Endothelial cell of umbilical vein (primary cell): ENCODE measurements at regions of chr5 and their contacts with region 1.

Region 1: GRCh38 chr5:180090098-180090768 is 18.7 kb upstream of the RNF130 start:
- DNase-seq: peak; percentile 77
- H3K4me3 ChIP-seq: peak overlapping the region; percentile 41 to 76 (median 72)
- H3K27ac ChIP-seq: peak overlapping the region; percentile 49
- H3K4me1 ChIP-seq: peaks cover 4% of the 10 kb centered on the region
- H3K27me3 ChIP-seq: peaks cover 1 to 4% of the 10 kb centered on the region in 2 experiments
- CTCF ChIP-seq: peak; percentile 79 to 85
- POLR2A ChIP-seq: no peak

Region 2: DNA sequence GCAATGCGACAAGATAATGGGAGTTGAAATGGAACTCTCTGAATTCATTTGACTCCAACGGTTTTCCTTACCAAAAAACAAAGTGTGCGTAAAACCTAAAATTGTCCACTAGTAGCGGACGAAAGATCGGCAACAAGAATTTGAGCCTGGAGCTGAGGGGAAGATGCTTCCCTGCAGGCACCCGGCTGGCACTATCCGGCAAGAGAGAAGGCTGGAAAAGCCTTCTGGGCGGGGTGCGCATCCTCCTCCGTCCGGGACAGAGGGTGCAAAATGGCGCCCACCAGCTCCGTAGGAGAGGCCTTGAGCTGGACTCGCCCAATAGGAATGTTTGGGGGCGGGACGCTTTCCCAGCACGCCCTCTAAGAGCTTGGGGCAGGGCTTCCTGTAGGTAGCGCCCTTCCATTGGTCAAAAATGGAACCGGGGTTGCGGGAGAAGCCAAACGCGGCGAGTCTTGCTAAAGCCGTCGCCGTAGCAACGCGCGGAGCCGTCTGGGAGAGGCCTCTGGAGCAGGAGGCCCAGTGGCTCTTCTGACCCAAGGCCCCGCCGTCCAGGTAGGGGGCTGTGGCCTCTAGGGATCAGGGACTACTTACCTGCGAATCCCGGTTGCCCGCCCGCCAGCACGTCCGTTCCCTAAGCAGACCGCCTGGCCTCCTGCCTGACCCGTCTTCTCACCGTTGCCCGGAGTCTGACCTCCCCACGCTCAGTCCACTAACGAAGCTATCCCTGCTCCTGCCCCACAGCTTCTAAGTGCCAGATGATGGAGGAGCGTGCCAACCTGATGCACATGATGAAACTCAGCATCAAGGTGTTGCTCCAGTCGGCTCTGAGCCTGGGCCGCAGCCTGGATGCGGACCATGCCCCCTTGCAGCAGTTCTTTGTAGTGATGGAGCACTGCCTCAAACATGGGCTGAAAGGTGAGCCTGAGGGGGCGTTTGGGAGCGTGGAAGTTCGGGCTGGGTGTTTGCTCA is 530.7 kb before region 1 on chr5:
- CTCF ChIA-PET with region 1: no interaction called
- POLR2A ChIA-PET with region 1: no interaction called
- dilution Hi-C with region 1: no loop called
- intact Hi-C with region 1: loop called (anchors 10 kb)
- DNase-seq: peak; percentile 98
- H3K4me3 ChIP-seq: peak overlapping the region; percentile 22 to 83 (median 48)
- H3K27ac ChIP-seq: peak overlapping the region; percentile 56
- H3K4me1 ChIP-seq: peaks cover 13% of the 10 kb centered on the region
- H3K27me3 ChIP-seq: no peaks in the 10 kb centered on the region
- CTCF ChIP-seq: no peak
- POLR2A ChIP-seq: peak; percentile 90

Region 3: GRCh38 chr5:179858586-179859427 is 231.4 kb before region 1 on chr5 and contains the start of gene MRNIP:
- CTCF ChIA-PET with region 1: no interaction called
- POLR2A ChIA-PET with region 1: no interaction called
- dilution Hi-C with region 1: no loop called
- intact Hi-C with region 1: loop called (anchors 1 kb)
- DNase-seq: peak; percentile 97
- H3K4me3 ChIP-seq: peak within 1 kb of the TSS; percentile 60 to 97 (median 75)
- H3K27ac ChIP-seq: no peak within 1 kb of the TSS
- H3K4me1 ChIP-seq: no peaks in the 10 kb centered on the region
- H3K27me3 ChIP-seq: no peaks in the 10 kb centered on the region
- CTCF ChIP-seq: peak in 1 of 2 donors; percentile 9
- POLR2A ChIP-seq: peak; percentile 82
- total RNA-seq, gene MRNIP: 17.6 and 19.1 TPM in 2 replicates

Region 4: DNA sequence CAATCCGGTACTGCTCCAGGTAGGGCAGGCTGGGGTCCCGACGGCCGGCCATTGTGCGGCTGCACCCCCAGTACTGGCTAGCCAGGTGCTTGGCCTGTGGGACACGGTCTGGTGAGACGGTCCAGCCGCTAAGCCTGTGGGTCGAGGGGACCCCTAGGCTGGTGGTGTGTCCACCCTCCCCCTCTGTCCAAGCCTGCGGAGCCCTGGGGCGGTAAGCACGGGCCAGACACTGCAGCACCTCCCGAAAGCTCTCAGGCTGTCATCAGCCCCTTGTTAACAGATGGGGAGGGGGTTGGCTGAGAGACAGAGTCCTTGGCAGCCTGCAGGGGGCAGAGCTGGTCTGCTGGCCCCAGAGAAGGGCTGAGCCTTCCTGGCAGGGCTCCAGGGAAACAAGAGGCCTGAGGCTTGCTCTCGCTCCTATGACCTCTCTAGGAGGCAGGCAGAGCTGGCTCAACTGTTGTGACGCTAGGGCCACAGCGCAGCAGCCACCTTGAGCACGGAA is 219.8 kb before region 1 on chr5:
- CTCF ChIA-PET with region 1: interaction called, 4 read pairs
- POLR2A ChIA-PET with region 1: no interaction called
- dilution Hi-C with region 1: no loop called
- intact Hi-C with region 1: loop called (anchors 1 kb)
- DNase-seq: peak; percentile 54
- H3K4me3 ChIP-seq: no peak overlapping the region
- H3K27ac ChIP-seq: no peak overlapping the region
- H3K4me1 ChIP-seq: no peaks in the 10 kb centered on the region
- H3K27me3 ChIP-seq: no peaks in the 10 kb centered on the region
- CTCF ChIP-seq: peak in 1 of 2 donors; percentile 72
- POLR2A ChIP-seq: no peak

Region 5: DNA sequence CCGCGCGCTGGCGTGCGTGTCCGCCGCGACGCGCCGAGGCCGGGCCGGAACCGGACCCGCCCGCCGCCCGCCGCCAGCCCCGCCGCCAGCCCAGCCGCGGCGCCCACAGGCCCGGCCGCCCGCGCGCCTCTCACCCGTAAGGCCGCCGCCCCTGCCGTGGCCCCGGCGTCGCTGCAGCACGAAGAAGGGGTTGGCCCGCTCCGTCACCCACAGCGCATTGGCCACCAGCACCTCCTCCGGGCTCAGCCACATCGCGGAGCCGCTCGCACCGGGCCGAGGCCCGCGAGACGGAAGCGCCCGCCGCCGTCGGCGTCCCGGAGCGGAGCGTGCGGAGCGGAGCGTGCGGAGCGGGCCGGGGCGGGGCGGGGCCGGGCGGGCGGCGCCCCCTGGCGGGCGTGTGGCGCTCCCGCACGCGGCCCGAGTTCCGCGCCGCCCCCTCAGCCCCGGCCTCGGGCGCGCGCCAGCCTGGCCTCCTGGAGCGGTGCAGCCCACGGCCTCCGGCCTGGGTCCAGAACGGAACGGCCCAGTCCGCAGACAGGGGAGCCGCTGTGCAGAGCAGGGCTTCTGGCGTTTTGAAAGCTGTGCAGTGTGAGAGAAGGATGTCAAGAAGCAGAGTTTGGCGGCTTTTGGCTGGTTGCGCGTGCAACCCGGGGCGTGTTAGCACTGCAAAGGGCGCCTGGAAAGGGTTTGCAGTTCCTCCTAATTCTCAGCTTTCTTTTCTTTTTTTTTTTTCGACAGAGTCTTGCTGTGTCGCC is 182.5 kb before region 1 on chr5 and contains the start of gene TBC1D9B:
- CTCF ChIA-PET with region 1: interaction called, 7 read pairs
- POLR2A ChIA-PET with region 1: no interaction called
- dilution Hi-C with region 1: no loop called
- intact Hi-C with region 1: loop called (anchors 1 kb)
- DNase-seq: peak; percentile 45
- H3K4me3 ChIP-seq: peak within 1 kb of the TSS; percentile 36 to 51 (median 48)
- H3K27ac ChIP-seq: no peak within 1 kb of the TSS
- H3K4me1 ChIP-seq: peaks cover 29% of the 10 kb centered on the region
- H3K27me3 ChIP-seq: no peaks in the 10 kb centered on the region
- CTCF ChIP-seq: peak; percentile 15 to 23
- POLR2A ChIP-seq: peak; percentile 80
- total RNA-seq, gene TBC1D9B: 120 and 150 TPM in 2 replicates

Region 6: GRCh38 chr5:179980767-179981166 is 109.5 kb before region 1 on chr5:
- CTCF ChIA-PET with region 1: interaction called, 11 read pairs
- POLR2A ChIA-PET with region 1: no interaction called
- dilution Hi-C with region 1: no loop called
- intact Hi-C with region 1: no loop called
- DNase-seq: no peak
- H3K4me3 ChIP-seq: no peak overlapping the region
- H3K27ac ChIP-seq: no peak overlapping the region
- H3K4me1 ChIP-seq: no peaks in the 10 kb centered on the region
- H3K27me3 ChIP-seq: no peaks in the 10 kb centered on the region
- CTCF ChIP-seq: no peak
- POLR2A ChIP-seq: no peak

Region 7: GRCh38 chr5:179986328-179986727 is 103.9 kb before region 1 on chr5:
- CTCF ChIA-PET with region 1: interaction called, 4 read pairs
- POLR2A ChIA-PET with region 1: no interaction called
- dilution Hi-C with region 1: no loop called
- intact Hi-C with region 1: loop called (anchors 1 kb)
- DNase-seq: peak; percentile 45
- H3K4me3 ChIP-seq: no peak overlapping the region
- H3K27ac ChIP-seq: no peak overlapping the region
- H3K4me1 ChIP-seq: no peaks in the 10 kb centered on the region
- H3K27me3 ChIP-seq: no peaks in the 10 kb centered on the region
- CTCF ChIP-seq: no peak
- POLR2A ChIP-seq: no peak